Activated naive CD4-positive, alpha-beta T cell treated with anti-CD3 and anti-CD28 coated beads for 36 hours (primary cell): ENCODE measurements at regions of chr15 and their contacts with region 1.

Region 1: GRCh38 chr15:88246666-88247446 is 9.7 kb downstream of the NTRK3 start:
- DNase-seq: peak; percentile 83
- H3K4me3 Mint-ChIP-seq: no peak overlapping the region
- H3K27ac Mint-ChIP-seq: no peak overlapping the region
- H3K4me1 Mint-ChIP-seq: peaks cover 5% of the 10 kb centered on the region
- H3K27me3 Mint-ChIP-seq: peaks cover 6% of the 10 kb centered on the region

Region 2: DNA sequence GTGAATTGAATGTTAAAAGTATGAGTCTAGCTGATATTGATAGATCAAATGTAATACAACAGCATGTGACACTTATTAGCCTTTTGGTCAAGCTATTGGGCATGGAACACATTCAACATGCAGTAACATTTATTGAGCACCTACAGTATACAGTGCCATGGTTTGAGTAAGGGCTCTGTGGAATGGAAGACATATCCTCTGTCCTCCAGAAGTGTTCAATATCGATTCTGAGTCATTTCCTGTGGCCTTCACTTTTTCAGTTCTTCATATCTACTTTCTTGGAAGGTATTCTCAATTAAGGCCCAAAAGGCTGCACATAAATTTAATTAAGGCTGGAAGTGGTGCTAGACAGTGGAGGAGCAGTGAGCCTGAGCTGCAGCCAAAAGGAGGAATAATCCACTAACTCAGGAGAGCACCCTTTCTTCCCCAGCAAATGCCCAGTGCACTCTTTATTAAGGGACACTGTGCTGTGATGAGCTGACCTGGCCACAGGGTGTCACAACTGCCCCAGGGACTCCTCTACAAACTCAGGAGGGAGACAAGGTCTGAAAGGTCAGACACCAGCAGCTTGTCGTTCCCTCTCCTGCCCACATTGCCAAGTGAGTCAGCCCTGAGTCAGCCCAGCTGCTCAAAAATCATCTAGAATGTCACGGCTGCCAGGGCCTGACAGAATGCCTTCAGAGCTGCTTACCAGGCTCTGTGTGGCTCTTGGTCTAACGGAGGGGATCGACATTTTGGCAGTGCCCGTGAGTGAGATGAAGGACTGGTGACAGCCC is 1622.4 kb before region 1 on chr15:
- CTCF ChIA-PET with region 1: no interaction called
- intact Hi-C with region 1: loop called (anchors 1 kb)
- DNase-seq: peak; percentile 88
- H3K4me3 Mint-ChIP-seq: no peak overlapping the region
- H3K27ac Mint-ChIP-seq: no peak overlapping the region
- H3K4me1 Mint-ChIP-seq: peaks cover 19% of the 10 kb centered on the region
- H3K27me3 Mint-ChIP-seq: no peaks in the 10 kb centered on the region

Region 3: GRCh38 chr15:87623832-87624231 is 623.0 kb before region 1 on chr15:
- CTCF ChIA-PET with region 1: no interaction called
- intact Hi-C with region 1: loop called (anchors 10 kb)
- DNase-seq: peak; percentile 28
- H3K4me3 Mint-ChIP-seq: no peak overlapping the region
- H3K27ac Mint-ChIP-seq: no peak overlapping the region
- H3K4me1 Mint-ChIP-seq: peaks cover 1% of the 10 kb centered on the region
- H3K27me3 Mint-ChIP-seq: no peaks in the 10 kb centered on the region

Region 4: DNA sequence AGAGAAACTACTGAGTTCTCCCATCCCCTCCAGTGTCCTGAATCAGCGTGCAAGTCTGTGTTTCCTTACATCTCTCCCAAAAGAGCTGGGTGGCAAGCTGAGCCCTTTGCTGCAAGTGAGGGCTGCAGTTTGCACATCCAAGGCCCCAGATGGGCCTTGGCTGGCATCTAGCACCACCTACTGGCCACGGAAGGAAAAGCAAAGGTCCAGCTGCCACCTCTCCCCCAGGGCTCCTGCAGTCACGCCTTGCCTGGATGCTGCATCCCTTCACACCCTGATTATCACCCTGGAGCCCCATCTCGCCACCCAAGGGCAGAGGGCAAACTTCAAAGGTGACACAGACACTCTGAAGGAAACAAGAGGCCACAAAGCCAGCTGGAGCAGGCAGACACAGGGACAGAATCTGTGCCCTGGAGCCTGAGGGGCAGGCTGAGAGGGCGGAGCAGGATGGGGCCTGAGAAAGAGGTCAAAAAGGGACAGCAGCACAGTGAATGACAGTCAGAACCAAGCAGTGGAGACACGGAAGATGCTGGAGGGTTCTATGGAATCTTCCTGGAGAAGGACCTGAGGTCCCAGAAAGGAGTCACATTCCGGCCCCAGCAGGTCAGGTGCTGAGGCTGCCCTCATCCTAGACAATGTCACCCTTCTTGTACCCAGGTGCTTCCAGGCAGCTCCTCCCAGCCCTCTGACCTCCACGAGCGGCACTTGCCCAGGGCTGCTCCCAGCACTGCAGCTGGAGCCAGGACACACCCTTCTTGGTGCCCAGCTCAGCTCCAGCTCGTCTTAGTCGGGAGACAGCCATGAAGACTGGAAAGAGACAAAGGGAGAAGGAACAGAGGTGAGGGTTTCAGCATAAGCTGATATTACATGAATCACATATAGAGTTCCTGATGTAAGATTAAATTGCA is 28.0 kb after region 1 on chr15:
- CTCF ChIA-PET with region 1: interaction called, 85 read pairs
- intact Hi-C with region 1: loop called (anchors 1 kb)
- DNase-seq: peak; percentile 80
- H3K4me3 Mint-ChIP-seq: no peak overlapping the region
- H3K27ac Mint-ChIP-seq: no peak overlapping the region
- H3K4me1 Mint-ChIP-seq: no peaks in the 10 kb centered on the region
- H3K27me3 Mint-ChIP-seq: peaks cover 11% of the 10 kb centered on the region

Region 5: DNA sequence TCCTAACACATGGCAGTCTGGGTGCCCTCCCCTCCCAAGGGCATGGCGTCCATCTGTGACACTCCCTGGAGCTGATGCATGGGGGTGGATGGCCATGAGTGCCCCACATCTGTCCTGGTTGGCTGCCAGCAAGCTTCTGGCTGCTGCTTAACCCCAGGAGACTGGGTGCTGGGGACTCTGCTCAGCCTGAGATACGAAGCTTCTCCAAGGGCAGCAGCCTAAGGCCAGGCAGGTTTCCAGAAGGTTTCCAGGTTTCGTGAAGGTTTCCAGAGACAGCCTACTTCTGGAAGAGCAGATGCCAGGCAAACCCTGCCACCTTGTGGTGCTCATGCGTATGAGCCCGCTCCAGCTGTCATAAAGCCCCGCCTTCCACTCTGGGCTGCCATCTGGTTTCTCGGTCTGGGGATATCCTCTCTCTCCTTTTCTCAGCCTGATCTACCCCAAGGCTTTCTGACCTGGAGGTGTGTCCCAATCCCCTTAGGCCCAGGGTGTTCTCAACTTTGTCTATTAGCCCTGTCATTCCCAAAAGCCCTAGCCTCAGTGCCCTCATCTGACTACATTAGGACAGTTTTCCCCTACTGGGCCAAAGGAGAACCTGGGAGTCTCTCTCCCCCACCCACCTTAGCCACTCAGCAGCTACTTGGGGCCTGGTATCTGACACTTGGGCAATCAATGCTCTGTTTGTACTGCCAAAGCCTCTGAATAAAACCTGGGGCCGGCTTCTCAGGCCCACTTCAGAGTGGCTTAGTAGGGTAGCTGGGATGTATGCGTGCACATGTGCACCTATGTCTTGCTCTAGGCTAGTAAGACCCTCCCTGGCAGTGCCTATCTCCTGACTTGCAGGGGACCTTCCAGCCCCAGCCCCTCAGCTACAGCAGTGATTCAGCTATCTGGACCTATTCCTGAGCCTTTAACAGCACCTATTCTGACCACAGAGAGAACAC is 208.3 kb after region 1 on chr15:
- CTCF ChIA-PET with region 1: interaction called, 30 read pairs
- intact Hi-C with region 1: loop called (anchors 1 kb)
- DNase-seq: peak; percentile 76
- H3K4me3 Mint-ChIP-seq: no peak overlapping the region
- H3K27ac Mint-ChIP-seq: no peak overlapping the region
- H3K4me1 Mint-ChIP-seq: peaks cover 5% of the 10 kb centered on the region
- H3K27me3 Mint-ChIP-seq: no peaks in the 10 kb centered on the region